SK-N-SH (cell line): ENCODE measurements at regions of chr5 and their contacts with region 1.

Region 1: GRCh38 chr5:42767491-42768105 is 11.0 kb downstream of the CCDC152 start:
- DNase-seq: peak; percentile 21
- H3K4me3 ChIP-seq: no peak overlapping the region
- H3K27ac ChIP-seq: no peak overlapping the region
- H3K4me1 ChIP-seq: no peaks in the 10 kb centered on the region
- H3K27me3 ChIP-seq: no peaks in the 10 kb centered on the region
- CTCF ChIP-seq: peak; percentile 68
- EP300 ChIP-seq: no peak
- RAD21 ChIP-seq: peak; percentile 76

Region 2: GRCh38 chr5:42745856-42746255 is 21.7 kb before region 1 on chr5:
- CTCF ChIA-PET with region 1: interaction called, 10 read pairs
- POLR2A ChIA-PET with region 1: no interaction called
- DNase-seq: no peak
- H3K4me3 ChIP-seq: no peak overlapping the region
- H3K27ac ChIP-seq: no peak overlapping the region
- H3K4me1 ChIP-seq: no peaks in the 10 kb centered on the region
- H3K27me3 ChIP-seq: no peaks in the 10 kb centered on the region
- CTCF ChIP-seq: no peak
- EP300 ChIP-seq: no peak
- RAD21 ChIP-seq: no peak

Region 3: DNA sequence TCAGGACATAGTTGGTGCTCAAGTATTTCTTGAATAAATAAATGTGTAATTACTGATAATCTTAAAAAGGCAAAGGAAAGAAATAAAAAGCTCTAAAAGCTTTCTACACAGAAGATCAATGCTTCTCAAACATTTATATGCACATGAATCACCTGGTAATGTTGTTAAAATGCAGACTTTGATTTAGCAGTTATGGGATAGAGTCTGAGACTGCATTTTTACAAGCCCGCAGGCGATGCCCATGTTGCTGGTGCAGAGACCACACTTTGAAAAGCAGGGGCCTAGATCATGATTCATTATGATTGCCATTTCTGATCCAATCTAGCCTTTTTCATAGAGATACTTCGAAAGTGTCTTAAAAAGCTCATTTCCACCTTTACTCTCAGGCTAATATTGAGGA is 14.5 kb before region 1 on chr5:
- CTCF ChIA-PET with region 1: interaction called, 22 read pairs
- POLR2A ChIA-PET with region 1: interaction called, 3 read pairs
- DNase-seq: no peak
- H3K4me3 ChIP-seq: no peak overlapping the region
- H3K27ac ChIP-seq: no peak overlapping the region
- H3K4me1 ChIP-seq: peaks cover 0 to 4% of the 10 kb centered on the region in 2 experiments; a peak in 1 of 4 replicates
- H3K27me3 ChIP-seq: no peaks in the 10 kb centered on the region
- CTCF ChIP-seq: no peak
- EP300 ChIP-seq: no peak
- RAD21 ChIP-seq: no peak

Region 4: GRCh38 chr5:42781584-42781983 is 14.0 kb after region 1 on chr5:
- CTCF ChIA-PET with region 1: interaction called, 15 read pairs
- POLR2A ChIA-PET with region 1: no interaction called
- DNase-seq: no peak
- H3K4me3 ChIP-seq: no peak overlapping the region
- H3K27ac ChIP-seq: no peak overlapping the region
- H3K4me1 ChIP-seq: no peaks in the 10 kb centered on the region; a peak in 1 of 4 replicates
- H3K27me3 ChIP-seq: no peaks in the 10 kb centered on the region
- CTCF ChIP-seq: no peak
- EP300 ChIP-seq: no peak
- RAD21 ChIP-seq: no peak

Region 5: GRCh38 chr5:42840269-42840668 is 72.7 kb after region 1 on chr5:
- CTCF ChIA-PET with region 1: no interaction called
- POLR2A ChIA-PET with region 1: no interaction called
- DNase-seq: no peak
- H3K4me3 ChIP-seq: no peak overlapping the region
- H3K27ac ChIP-seq: no peak overlapping the region
- H3K4me1 ChIP-seq: no peaks in the 10 kb centered on the region
- H3K27me3 ChIP-seq: peaks cover 6% of the 10 kb centered on the region; the same call in 1 of the 2 replicates
- CTCF ChIP-seq: no peak
- EP300 ChIP-seq: no peak
- RAD21 ChIP-seq: no peak